Heart left ventricle (tissue), 16 donors: ENCODE measurements at regions of chr5 and their contacts with region 1.

Region 1: GRCh38 chr5:152701305-152701949 is 296.3 kb upstream of the NMUR2 start:
- DNase-seq: no peak
- ATAC-seq: no peak
- H3K4me3 ChIP-seq: no peak overlapping the region
- H3K27ac ChIP-seq: no peak overlapping the region
- H3K4me1 ChIP-seq: no peaks in the 10 kb centered on the region
- H3K27me3 ChIP-seq: no peaks in the 10 kb centered on the region
- CTCF ChIP-seq: no peak
- POLR2A ChIP-seq: no peak

Region 2: GRCh38 chr5:151880324-151880723 is 821.1 kb before region 1 on chr5:
- intact Hi-C with region 1: loop called in 1 of 10 experiments (anchors 10 kb)
- DNase-seq: peak; percentile 60 to 86 (median 73)
- ATAC-seq: peak; percentile 95 to 98 (median 98)
- H3K4me3 ChIP-seq: no peak overlapping the region
- H3K27ac ChIP-seq: no peak overlapping the region
- H3K4me1 ChIP-seq: peaks cover 0 to 20% (median 0%) of the 10 kb centered on the region in 12 donors
- H3K27me3 ChIP-seq: no peaks in the 10 kb centered on the region
- CTCF ChIP-seq: peak in 1 of 12 donors; percentile 11
- POLR2A ChIP-seq: no peak

Region 3: DNA sequence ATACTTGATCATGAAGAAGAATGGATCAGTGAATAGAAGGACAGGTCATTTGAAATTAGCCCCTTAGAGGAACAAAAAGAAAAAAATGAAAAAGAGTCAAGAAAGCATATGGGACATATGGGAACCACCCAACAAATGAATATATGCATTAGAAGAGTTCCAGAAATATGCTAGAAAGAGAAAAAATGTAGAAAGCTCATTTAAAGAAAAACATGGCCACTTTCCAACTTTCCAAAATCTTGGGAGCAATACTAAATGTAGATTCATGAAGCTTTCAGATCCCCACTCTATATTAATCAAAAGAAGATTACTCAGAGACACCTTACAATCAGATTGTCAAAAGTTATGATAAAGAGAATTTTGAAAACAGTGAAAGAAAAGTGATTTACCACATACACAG is 38.5 kb after region 1 on chr5:
- intact Hi-C with region 1: no loop called
- DNase-seq: no peak
- ATAC-seq: no peak
- H3K4me3 ChIP-seq: no peak overlapping the region
- H3K27ac ChIP-seq: no peak overlapping the region
- H3K4me1 ChIP-seq: no peaks in the 10 kb centered on the region
- H3K27me3 ChIP-seq: no peaks in the 10 kb centered on the region
- CTCF ChIP-seq: no peak
- POLR2A ChIP-seq: no peak